HCT116 (cell line): ENCODE measurements at regions of chr12 and their contacts with region 1.

Region 1: DNA sequence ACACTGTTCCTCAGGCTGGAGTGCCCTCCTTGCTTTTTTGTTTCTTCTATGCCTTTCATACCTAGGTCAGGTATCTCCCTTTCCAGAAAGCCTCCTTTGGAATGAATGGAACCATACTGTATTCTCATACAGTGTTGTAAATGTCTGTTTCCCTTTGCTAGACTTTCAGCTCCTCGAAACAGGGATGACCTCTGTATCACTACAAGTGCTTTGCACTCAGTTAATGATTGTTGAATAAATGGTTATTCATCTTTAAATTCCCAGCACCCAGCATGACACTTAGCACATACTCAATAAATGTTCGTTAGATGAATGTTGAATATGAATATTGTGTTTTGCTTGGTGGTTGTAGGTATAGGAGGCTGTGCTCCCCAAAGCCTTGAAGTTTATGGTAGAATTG is 5.9 kb upstream of the TULP3 start:
- DNase-seq: no peak
- ATAC-seq: peak; percentile 34
- H3K4me3 ChIP-seq: no peak overlapping the region
- H3K27ac ChIP-seq: no peak overlapping the region
- H3K4me1 ChIP-seq: peaks cover 0 to under 1% of the 10 kb centered on the region in 2 experiments; a peak in 2 of 4 replicates
- H3K27me3 ChIP-seq: no peaks in the 10 kb centered on the region
- CTCF ChIP-seq: no peak
- POLR2A ChIP-seq: no peak
- RAD21 ChIP-seq: no peak

Region 2: GRCh38 chr12:2652401-2653081 is 232.3 kb before region 1 on chr12:
- CTCF ChIA-PET with region 1: no interaction called
- POLR2A ChIA-PET with region 1: no interaction called
- RAD21 ChIA-PET with region 1: no interaction called
- intact Hi-C with region 1: no loop called
- DNase-seq: no peak
- ATAC-seq: peak; percentile 94
- H3K4me3 ChIP-seq: no peak overlapping the region
- H3K27ac ChIP-seq: no peak overlapping the region
- H3K4me1 ChIP-seq: no peaks in the 10 kb centered on the region; a peak in 1 of 4 replicates
- H3K27me3 ChIP-seq: no peaks in the 10 kb centered on the region
- CTCF ChIP-seq: peak; percentile 31 to 68 (median 49); a peak in 5 of 6 replicates
- POLR2A ChIP-seq: no peak
- RAD21 ChIP-seq: peak; percentile 67

Region 3: DNA sequence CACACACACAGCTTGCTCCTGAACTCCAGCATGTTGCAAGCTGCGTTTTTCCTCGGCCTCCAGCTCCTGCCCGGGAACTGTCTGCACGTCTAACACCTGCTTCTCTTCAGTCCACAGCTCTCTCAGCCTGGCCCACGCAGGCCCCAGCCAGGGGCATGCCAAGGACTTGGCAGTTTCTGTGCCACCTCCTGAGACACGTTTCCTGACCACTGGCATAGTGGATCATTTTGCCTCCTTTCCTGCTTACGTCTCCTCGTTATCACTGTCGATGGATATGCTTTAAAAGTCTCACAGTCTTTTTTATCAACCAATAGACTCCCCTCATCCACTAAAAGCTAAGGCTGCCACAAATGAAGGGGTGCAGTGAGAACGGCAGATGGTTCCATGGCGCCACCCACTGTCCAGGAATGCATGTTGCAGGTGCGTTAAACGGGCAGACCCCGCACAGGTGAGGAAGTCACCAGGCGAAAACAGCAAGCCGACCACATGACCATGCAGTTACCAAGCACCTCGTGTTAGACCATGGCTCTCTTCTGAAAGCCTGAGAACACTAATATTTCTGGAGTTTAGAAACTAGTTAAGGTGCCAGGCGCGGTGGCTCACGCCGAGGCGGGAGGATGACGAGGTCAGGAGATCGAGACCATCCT is 59.7 kb after region 1 on chr12:
- CTCF ChIA-PET with region 1: interaction called, 22 read pairs
- POLR2A ChIA-PET with region 1: interaction called, 3 read pairs
- RAD21 ChIA-PET with region 1: interaction called in 1 of 2 experiments, 3 read pairs
- intact Hi-C with region 1: loop called (anchors 1 kb)
- DNase-seq: peak; percentile 34
- ATAC-seq: peak; percentile 95
- H3K4me3 ChIP-seq: no peak overlapping the region
- H3K27ac ChIP-seq: no peak overlapping the region
- H3K4me1 ChIP-seq: peaks cover 2 to 11% of the 10 kb centered on the region in 2 experiments; a peak in 2 of 4 replicates
- H3K27me3 ChIP-seq: no peaks in the 10 kb centered on the region
- CTCF ChIP-seq: peak; percentile 86 to 97 (median 92)
- POLR2A ChIP-seq: no peak
- RAD21 ChIP-seq: peak; percentile 84